ENCODE measurements at regions of chr6 and their contacts with region 1.

Region 1: DNA sequence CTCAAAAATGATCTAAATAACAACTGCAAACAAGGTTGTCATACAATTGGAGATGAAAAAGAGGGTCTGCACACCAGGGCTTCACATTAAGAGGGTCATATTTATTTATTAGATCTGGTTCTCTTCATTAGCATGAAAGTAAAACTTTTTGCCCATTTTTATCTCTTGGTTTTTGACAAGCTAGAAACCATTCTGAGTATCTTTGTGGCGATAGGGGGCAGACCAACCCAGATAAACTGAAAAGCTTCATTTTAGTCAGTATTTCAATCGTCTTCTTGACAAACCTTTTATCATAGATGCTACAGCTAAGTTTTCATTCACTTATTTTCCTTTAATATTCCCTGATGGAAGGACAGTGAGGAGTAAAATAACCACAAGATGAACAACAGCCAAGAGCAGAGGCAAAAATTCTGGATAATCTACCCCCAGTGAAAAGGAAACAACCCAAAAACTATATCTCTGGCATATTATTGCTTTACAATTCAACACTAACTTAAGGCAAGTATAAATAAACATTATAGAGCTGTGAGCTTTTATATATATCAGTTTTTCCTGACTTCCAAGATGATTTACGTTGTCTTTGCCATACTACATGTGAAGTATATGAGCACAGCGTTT is 45.2 kb downstream of the THEMIS start:
- DNase-seq: no peak
- H3K4me3 ChIP-seq: no peak overlapping the region
- CTCF ChIP-seq: peak; percentile 39

Region 2: DNA sequence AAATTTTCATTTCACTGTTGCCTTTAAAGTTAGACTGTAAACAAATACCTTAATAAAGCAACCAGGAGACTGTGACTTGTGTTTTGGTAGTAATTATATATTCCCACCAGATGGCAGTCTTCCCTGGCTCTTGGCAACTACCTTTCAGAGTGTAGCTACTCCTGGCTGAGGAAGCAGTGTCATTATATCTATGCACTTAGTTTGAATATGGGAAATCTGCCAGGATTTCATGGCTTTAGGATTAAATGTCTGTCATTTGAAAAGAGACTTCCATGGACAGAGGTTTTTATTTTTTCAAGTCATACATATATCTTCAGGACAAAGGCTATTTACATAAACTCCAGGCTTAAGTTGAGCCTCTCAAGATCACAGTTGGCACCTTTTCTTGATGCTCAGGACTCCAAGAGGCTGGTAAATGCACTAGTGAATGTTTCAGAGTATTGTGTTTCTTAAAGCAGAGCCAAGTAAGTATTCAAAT is 118.6 kb before region 1 on chr6:
- CTCF ChIA-PET with region 1: interaction called, 22 read pairs
- POLR2A ChIA-PET with region 1: no interaction called
- DNase-seq: peak; percentile 24
- H3K4me3 ChIP-seq: no peak overlapping the region
- CTCF ChIP-seq: peak; percentile 54

Region 3: DNA sequence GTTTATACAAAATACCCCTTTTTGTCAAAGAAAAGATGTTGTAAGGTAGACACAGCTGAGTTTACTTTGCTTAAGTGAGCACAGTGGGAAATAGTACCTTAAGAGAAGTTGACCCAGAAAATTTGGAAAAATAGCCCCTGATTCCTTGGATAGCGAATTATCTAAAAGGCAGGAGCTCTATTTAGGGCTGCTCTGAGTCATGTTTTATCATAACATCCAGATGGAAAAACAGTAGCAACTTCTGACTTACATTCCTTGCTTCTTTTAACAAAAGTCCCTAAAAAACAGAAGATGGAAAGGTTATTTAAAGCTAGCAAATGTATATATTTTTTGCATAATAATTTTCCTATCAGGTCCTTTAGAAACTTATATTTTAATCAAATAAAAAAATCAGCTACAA is 13.8 kb before region 1 on chr6:
- CTCF ChIA-PET with region 1: interaction called, 16 read pairs
- POLR2A ChIA-PET with region 1: no interaction called
- DNase-seq: no peak
- H3K4me3 ChIP-seq: no peak overlapping the region
- CTCF ChIP-seq: no peak

Region 4: DNA sequence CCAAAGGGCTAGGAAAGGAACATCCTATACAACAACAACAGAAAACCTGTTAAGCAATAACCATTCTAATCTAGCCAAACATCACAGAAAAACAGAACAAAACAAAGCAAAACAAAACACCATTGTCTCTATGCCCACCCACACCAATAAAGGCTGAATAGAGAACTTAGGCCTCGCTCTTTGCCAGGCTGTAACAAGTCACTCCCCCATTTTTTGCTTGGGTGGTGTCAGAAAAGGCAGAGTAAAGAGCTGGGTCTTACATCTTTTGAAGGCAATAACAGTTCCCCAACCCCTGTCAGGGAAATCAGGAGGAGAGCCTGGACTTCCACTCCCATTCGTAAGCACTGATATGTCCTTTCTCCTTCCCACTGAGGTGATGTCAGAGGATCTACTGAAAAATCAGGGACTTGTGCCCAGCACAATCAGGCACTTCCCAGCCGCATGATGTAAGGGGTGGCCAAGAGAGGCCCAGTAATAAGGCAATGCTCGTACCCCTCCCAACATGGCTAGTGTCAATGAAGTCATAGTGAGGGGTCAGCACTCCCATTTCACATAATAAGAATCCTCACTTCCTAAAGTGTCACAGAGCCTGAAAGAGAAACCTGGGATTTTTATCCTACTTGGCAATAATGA is 14.2 kb after region 1 on chr6:
- CTCF ChIA-PET with region 1: interaction called, 15 read pairs
- POLR2A ChIA-PET with region 1: no interaction called
- DNase-seq: no peak
- H3K4me3 ChIP-seq: no peak overlapping the region
- CTCF ChIP-seq: no peak

Region 5: DNA sequence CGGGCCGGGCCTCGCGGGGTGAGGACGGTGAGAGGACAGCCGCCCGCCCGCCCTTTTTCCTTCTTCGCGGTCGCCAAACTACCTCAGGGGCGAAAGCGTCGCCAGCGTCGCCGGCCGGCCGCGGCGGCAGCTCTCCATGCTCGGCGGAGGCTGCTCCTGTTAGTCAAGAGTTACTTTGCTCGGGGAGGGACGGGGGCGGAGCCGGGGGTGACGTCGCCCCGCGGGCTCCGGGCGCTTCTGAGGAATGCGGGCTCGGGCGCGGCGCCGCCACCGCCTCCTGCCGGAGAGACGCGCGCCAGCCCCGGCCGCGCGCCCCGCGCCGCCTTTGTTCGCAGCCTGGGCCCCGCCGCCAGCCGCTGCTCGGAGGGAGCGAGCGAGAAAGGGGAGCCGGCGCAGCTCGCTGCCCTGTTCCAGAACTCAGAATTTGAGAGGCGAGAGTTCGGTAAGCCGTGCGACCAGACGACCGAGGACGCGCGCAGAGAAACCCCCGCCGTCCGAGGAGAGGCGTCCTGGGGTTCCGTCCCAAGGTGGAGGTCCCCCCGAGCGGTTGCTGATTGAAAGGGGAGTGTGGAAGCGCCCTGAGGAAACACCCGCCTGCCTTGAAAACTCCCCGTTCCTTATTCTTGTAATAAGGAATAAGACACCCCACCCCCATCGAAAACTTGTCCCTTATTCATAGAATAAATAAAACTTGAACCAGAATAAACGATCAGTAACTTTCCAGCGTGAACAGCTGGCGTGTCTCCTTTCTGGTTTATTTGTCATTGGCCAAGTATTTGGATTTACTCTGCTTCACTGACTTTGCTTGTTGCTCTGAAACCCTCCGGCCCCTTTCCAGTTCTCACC is 665.0 kb after region 1 on chr6 and contains the start of gene PTPRK:
- CTCF ChIA-PET with region 1: interaction called, 31 read pairs
- POLR2A ChIA-PET with region 1: no interaction called
- DNase-seq: no peak
- H3K4me3 ChIP-seq: peak within 1 kb of the TSS; percentile 90
- CTCF ChIP-seq: peak; percentile 28

Region 6: GRCh38 chr6:128731249-128732165 is 875.9 kb after region 1 on chr6:
- CTCF ChIA-PET with region 1: interaction called, 21 read pairs
- POLR2A ChIA-PET with region 1: no interaction called
- DNase-seq: no peak
- H3K4me3 ChIP-seq: no peak overlapping the region
- CTCF ChIP-seq: peak; percentile 64